ENCODE measurements at regions of chr2 and their contacts with region 1.

Region 1: GRCh38 chr2:11692966-11693521 is 23.0 kb upstream of the NTSR2 start:
- DNase-seq: peak; percentile 62 to 86
- H3K4me3 ChIP-seq: no peak overlapping the region
- CTCF ChIP-seq: peak in 1 of 3 donors; percentile 55
- POLR2A ChIP-seq: no peak

Region 2: GRCh38 chr2:11784747-11785610 is 91.9 kb after region 1 on chr2:
- intact Hi-C with region 1: loop called (anchors 5 kb)
- DNase-seq: peak in 1 of 2 donors; percentile 87
- H3K4me3 ChIP-seq: no peak overlapping the region
- CTCF ChIP-seq: no peak
- POLR2A ChIP-seq: no peak